Activated naive CD4-positive, alpha-beta T cell treated with anti-CD3 and anti-CD28 coated beads for 36 hours (primary cell): ENCODE measurements at regions of chr5 and their contacts with region 1.

Region 1: DNA sequence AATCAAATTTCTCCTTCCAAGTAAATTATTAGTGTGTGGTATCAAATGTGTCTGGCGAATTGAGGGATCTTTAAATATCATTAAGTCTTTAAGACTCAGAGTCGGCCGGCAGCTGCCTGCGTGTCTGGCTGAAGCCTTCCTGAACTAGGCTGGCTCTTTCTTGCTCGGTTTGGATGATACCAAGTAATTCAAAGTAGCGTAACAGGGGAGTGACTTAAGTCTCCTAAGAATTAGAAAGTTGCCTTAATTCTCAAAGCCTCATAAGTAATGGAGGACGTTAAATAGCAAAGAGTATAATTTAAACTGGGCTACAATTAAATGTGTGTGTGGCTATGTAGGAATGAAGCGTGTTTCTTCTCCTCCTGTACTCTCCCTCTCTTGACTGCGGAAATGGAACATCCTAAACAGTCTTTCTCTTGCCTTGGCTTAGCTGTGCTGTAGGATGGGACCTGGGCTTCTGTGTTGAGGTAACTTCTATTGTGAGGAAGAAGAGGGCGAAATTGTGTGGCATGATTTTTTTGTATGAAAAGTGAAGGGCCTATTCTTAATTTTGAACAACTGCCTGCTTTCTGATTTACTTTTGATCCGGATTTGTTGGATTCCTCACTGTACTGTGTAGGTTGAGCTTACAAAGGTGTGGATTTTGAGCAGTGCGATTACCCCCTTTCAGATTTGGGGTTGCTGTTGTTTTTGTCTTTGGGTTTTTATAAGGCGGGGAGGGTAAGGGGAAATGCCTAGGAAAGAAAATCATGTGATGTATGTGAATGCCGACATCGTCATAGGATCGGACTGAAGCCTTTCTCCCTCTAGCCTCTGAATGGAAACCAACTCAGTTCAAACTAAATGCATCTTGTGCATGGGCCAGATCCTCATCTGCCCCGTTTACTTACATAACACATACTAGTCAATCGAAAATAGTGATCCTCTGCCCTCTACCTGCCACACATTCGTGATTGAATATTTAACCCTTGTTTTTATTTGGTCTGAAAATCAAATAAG is 29.9 kb downstream of the CPEB4 start:
- DNase-seq: peak; percentile 72
- H3K4me3 Mint-ChIP-seq: no peak overlapping the region
- H3K27ac Mint-ChIP-seq: no peak overlapping the region
- H3K4me1 Mint-ChIP-seq: peaks cover 18% of the 10 kb centered on the region
- H3K27me3 Mint-ChIP-seq: no peaks in the 10 kb centered on the region

Region 2: DNA sequence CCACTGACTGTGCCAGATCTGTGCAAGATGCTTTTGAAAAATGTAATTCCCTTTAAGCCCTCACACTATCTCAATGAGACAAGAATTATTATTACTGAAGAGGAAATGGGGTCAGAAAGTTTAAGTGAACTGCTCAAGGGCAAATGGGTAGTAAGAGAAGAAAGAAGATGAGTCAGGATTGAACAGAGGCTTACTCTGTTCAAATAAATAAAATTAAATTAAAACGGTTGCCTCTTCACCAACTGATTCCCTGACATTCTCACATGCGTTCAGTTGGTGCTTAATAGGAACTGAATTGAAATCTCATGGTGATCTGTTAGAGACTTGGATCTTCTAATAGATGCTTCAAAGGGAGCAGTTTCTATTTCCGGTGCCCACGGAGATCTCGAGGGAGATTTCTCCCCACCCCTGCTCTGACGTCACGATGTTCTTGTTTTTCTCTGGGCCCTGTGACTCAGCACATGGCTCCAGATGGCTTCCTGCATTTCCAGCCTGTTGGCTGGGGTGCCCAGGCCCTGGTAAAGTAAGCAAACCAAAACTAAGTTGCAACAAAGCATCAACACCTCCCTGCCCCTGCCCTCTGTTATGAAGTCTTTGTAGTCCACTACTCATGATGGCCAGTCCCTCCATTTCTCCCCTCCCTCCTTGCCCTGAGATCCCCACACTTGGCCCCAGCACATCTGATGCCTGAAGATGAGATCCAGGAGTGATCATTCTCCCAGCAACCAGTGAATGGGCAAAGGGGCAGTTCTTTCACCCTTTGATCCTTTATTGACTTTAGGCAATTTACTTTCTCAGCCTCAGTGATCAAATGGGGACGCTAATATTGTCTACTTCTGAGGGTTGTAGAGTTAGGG is 136.0 kb before region 1 on chr5:
- CTCF ChIA-PET with region 1: no interaction called
- intact Hi-C with region 1: loop called (anchors 1 kb)
- DNase-seq: peak; percentile 84
- H3K4me3 Mint-ChIP-seq: no peak overlapping the region
- H3K27ac Mint-ChIP-seq: peak overlapping the region; percentile 86
- H3K4me1 Mint-ChIP-seq: peaks cover 31% of the 10 kb centered on the region
- H3K27me3 Mint-ChIP-seq: no peaks in the 10 kb centered on the region